Heart right ventricle (tissue), 16 donors: ENCODE measurements at regions of chr9 and their contacts with region 1.

Region 1: DNA sequence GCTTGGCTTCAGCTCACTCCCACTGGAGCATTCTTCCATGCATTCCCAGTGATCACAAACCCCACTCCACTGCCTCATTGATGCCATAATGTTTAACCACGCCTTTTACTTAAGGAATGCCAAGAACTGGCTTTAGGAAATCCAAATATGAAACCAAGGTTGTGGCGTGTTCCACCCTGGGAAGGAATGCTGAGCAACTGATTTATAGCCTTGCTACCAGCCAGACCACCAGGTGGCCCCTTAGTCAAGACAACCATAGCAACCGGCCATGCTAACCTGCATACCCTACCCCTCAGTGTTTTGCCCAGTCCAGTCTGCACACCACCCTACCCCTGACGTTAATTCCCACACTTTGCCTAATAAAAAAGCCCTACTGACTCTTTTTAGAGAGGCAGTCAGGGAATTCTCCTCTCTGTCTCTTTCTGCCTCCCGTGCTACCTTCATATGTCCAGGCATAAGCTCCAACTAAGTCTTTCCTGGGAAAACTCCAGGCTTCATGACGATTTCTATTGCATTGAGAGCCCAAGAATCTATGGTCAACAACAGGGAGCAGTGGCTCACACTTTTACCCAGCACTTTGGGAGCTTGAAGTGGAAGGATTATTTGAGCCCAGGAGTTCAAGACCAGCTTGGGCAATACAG is 27.0 kb upstream of the PRRC2B start:
- DNase-seq: no peak
- ATAC-seq: peak; percentile 65 to 84 (median 71)
- H3K4me3 ChIP-seq: no peak overlapping the region
- H3K27ac ChIP-seq: no peak overlapping the region
- H3K4me1 ChIP-seq: peaks cover 0 to 19% (median 5%) of the 10 kb centered on the region in 9 donors
- H3K27me3 ChIP-seq: no peaks in the 10 kb centered on the region
- CTCF ChIP-seq: peak in 8 of 9 donors; percentile 31 to 63 (median 53)

Region 2: GRCh38 chr9:131423171-131423581 is 56.3 kb after region 1 on chr9:
- intact Hi-C with region 1: loop called in 1 of 10 experiments (anchors 10 kb)
- DNase-seq: peak; percentile 52 to 61
- ATAC-seq: peak; percentile 65 to 77 (median 70)
- H3K4me3 ChIP-seq: peak overlapping the region in 2 of 10 donors; percentile 1 to 15
- H3K27ac ChIP-seq: peak overlapping the region in 9 of 10 donors; percentile 39 to 75 (median 55)
- H3K4me1 ChIP-seq: peaks cover 45 to 80% (median 63%) of the 10 kb centered on the region in 9 donors
- H3K27me3 ChIP-seq: no peaks in the 10 kb centered on the region
- CTCF ChIP-seq: no peak

Region 3: DNA sequence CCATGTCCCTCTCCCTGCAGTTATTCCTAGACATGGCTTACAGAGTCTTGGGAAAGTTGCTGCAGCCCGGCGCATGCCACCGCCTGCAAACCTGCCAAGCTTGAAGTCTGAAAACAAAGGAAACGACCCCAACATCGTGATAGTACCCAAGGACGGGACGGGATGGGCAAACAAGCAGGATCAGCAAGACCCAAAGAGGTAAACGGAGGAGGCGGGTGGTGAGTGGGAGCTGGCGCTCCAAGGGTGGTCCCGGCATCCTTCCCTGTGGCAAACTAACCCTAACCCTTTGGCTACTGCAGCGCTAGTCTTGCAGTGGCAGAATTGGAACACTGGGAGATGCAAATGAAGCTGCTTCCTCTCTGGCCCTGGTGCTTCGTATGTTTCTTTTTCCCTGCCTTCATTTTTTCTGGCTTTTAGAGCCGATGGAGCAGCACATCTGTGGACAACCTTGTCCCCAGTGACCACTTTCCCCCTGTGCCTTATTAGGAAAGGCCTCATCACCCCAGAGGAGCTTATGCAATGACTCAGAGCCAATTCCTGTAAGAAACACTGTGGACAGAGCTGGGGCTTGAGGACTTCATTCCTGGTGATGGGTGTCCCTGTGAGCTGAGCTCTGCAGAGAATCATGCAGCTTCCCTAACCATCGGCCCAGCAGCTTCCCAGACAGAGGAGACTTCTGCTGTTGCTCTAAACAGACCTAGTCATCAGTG is 65.9 kb after region 1 on chr9:
- intact Hi-C with region 1: loop called in 2 of 10 experiments (anchors 10 kb)
- DNase-seq: no peak
- ATAC-seq: peak in 7 of 8 donors; percentile 28 to 74 (median 45)
- H3K4me3 ChIP-seq: no peak overlapping the region
- H3K27ac ChIP-seq: peak overlapping the region in 4 of 10 donors; percentile 23 to 57 (median 38)
- H3K4me1 ChIP-seq: peaks cover 5 to 83% (median 43%) of the 10 kb centered on the region in 9 donors
- H3K27me3 ChIP-seq: no peaks in the 10 kb centered on the region
- CTCF ChIP-seq: no peak

Region 4: DNA sequence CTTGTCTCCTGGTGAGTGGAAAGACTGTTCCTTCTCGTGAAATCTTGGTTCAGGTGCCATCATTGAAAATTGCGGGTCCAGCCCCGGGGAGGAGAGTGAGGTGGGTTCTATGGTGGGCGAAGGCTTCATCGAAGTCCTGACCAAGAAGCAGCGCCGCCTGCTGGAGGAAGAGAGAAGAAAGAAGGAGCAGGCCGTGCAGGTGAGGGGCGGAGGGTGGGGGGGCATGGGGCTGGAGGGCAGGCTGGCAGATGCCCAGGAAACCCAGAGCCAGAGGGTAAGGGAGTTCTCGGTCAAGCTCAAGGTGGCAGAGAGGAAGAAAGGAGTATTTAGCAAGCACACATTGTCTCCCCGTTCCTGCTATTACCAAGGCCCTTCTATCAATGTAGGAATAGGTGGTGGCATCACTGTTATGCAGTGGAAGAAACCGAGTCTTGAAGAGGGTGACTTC is 111.6 kb after region 1 on chr9:
- intact Hi-C with region 1: loop called in 5 of 10 experiments (anchors 5 to 10 kb)
- DNase-seq: peak; percentile 38 to 53
- ATAC-seq: no peak
- H3K4me3 ChIP-seq: no peak overlapping the region
- H3K27ac ChIP-seq: peak overlapping the region in 1 of 10 donors; percentile 79
- H3K4me1 ChIP-seq: peaks cover 2 to 51% (median 24%) of the 10 kb centered on the region in 9 donors
- H3K27me3 ChIP-seq: no peaks in the 10 kb centered on the region
- CTCF ChIP-seq: peak; percentile 34 to 69 (median 62)